PC-9 (cell line): ENCODE measurements at regions of chr1 and their contacts with region 1.

Region 1: GRCh38 chr1:112840631-112841624 is 115.1 kb downstream of the SLC16A1 start:
- DNase-seq: peak in 1 of 2 experiments; percentile 80
- H3K4me3 ChIP-seq: no peak overlapping the region
- H3K27ac ChIP-seq: peak overlapping the region; percentile 1; the same call in 1 of the 2 replicates
- H3K4me1 ChIP-seq: peaks cover 44% of the 10 kb centered on the region
- H3K27me3 ChIP-seq: no peaks in the 10 kb centered on the region
- CTCF ChIP-seq: no peak

Region 2: DNA sequence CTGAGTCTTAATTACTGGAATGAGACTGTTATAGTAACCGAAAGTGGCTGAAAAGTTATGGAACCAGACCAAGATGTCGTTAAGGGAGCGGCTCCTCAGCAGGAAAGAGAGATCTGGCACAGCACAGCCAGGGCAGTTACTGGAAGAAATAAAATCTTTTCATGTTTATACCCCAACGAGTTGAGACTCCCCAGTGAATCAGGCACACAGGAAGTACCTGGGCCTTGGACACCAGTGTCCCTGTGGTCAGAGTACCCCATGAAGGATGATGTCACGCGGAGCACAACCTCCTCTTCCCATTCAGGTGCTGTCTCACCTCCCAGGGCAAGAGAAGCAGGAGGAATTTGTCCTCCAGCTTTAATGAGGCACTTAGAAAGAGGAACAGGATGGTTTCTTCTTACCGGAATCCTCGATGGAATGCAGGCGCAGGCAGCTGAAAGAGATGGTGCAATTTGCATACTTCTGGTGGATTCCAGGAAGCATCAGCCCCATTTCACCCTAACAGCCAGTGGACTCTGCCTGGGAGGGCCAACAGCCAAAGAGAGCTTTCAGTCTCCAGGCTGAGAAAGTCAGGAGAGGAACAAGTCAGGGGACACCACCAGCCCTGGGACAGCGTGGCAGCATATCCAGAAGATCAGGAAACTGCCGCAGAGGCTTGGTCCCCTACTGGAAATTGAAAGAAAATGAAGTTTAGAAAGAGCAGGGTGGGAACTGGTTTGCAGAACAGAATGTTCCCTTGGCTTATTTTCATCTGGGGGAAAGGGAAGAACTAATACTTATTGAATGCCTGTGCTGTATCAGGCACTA is 480.8 kb before region 1 on chr1:
- CTCF ChIA-PET with region 1: no interaction called
- POLR2A ChIA-PET with region 1: interaction called, 14 read pairs
- intact Hi-C with region 1: no loop called
- DNase-seq: peak; percentile 34 to 71
- H3K4me3 ChIP-seq: no peak overlapping the region
- H3K27ac ChIP-seq: no peak overlapping the region
- H3K4me1 ChIP-seq: no peaks in the 10 kb centered on the region
- H3K27me3 ChIP-seq: peaks cover 73% of the 10 kb centered on the region
- CTCF ChIP-seq: peak; percentile 24; the same call in 1 of the 2 replicates

Region 3: DNA sequence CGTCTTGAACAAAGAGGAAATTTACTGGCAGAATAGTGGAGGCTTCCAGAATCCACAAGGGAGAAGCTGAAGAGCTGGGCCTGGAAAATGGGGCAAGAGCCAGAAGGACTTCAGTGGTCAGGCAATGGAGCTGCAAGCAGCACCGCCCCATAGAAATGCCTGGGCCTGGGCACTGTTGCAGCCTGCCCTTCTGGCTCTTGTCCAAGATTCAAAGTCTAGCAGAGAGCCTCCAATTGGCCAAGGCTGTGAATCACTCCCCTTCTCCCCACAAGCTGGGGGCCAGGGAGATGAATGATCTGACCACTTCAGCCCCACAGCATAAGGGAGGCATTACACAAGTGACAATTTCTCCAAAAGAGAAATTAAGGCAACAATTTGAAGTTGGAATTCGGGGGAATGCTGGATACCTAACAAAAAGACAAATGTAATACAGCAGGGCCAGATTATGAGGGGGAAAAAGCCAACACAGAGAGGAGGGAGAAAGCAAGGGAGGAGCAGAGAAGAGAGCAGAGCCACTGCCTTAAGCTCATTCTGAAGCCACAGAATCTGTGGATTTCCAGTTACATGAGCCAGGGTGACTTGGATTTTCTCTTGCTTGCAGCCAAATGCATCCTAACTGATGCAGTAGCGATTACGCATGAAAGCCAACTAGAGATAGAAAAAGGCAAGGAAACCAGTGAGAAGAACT is 312.3 kb after region 1 on chr1:
- CTCF ChIA-PET with region 1: no interaction called
- POLR2A ChIA-PET with region 1: no interaction called
- intact Hi-C with region 1: no loop called
- DNase-seq: no peak
- H3K4me3 ChIP-seq: no peak overlapping the region
- H3K27ac ChIP-seq: no peak overlapping the region
- H3K4me1 ChIP-seq: no peaks in the 10 kb centered on the region
- H3K27me3 ChIP-seq: no peaks in the 10 kb centered on the region
- CTCF ChIP-seq: no peak